ENCODE measurements at regions of chr2 and their contacts with region 1.

Region 1: GRCh38 chr2:219294356-219295351 is 14.5 kb downstream of the PTPRN start:
- DNase-seq: peak; percentile 36
- H3K4me3 ChIP-seq: peak overlapping the region; percentile 56
- H3K27ac ChIP-seq: peak overlapping the region; percentile 21
- H3K27me3 ChIP-seq: no peaks in the 10 kb centered on the region
- CTCF ChIP-seq: peak; percentile 89

Region 2: GRCh38 chr2:219171231-219171651 is 123.4 kb before region 1 on chr2:
- CTCF ChIA-PET with region 1: interaction called, 50 read pairs
- POLR2A ChIA-PET with region 1: no interaction called
- DNase-seq: peak; percentile 64
- H3K4me3 ChIP-seq: no peak overlapping the region
- H3K27ac ChIP-seq: peak overlapping the region; percentile 70
- H3K27me3 ChIP-seq: no peaks in the 10 kb centered on the region
- CTCF ChIP-seq: peak; percentile 79

Region 3: GRCh38 chr2:219218732-219219701 is 75.6 kb before region 1 on chr2 and contains the start of gene ABCB6:
- CTCF ChIA-PET with region 1: interaction called, 11 read pairs
- POLR2A ChIA-PET with region 1: no interaction called
- DNase-seq: peak; percentile 84
- H3K4me3 ChIP-seq: peak within 1 kb of the TSS; percentile 69
- H3K27ac ChIP-seq: peak within 1 kb of the TSS; percentile 96
- H3K27me3 ChIP-seq: no peaks in the 10 kb centered on the region
- CTCF ChIP-seq: no peak
- polyA plus RNA-seq, gene ABCB6: 20.9 and 22.2 TPM in 2 replicates

Region 4: GRCh38 chr2:219253753-219254590 is 40.7 kb before region 1 on chr2 and contains the start of gene TUBA4A:
- CTCF ChIA-PET with region 1: interaction called, 24 read pairs
- POLR2A ChIA-PET with region 1: no interaction called
- DNase-seq: no peak
- H3K4me3 ChIP-seq: peak within 1 kb of the TSS; percentile 66
- H3K27ac ChIP-seq: no peak within 1 kb of the TSS
- H3K27me3 ChIP-seq: peaks cover 14% of the 10 kb centered on the region
- CTCF ChIP-seq: no peak
- polyA plus RNA-seq, gene TUBA4A: 22.4 and 22.6 TPM in 2 replicates

Region 5: GRCh38 chr2:219362524-219363164 is 68.0 kb after region 1 on chr2:
- CTCF ChIA-PET with region 1: interaction called, 10 read pairs
- POLR2A ChIA-PET with region 1: no interaction called
- DNase-seq: peak; percentile 94
- H3K4me3 ChIP-seq: no peak overlapping the region
- H3K27ac ChIP-seq: peak overlapping the region; percentile 21
- H3K27me3 ChIP-seq: peaks cover 27% of the 10 kb centered on the region
- CTCF ChIP-seq: no peak

Region 6: GRCh38 chr2:219851801-219852481 is 557.3 kb after region 1 on chr2:
- CTCF ChIA-PET with region 1: no interaction called
- POLR2A ChIA-PET with region 1: no interaction called
- DNase-seq: no peak
- H3K4me3 ChIP-seq: peak overlapping the region; percentile 22; the same call in 1 of the 2 replicates
- H3K27ac ChIP-seq: no peak overlapping the region
- H3K27me3 ChIP-seq: peaks cover 21% of the 10 kb centered on the region
- CTCF ChIP-seq: no peak